CD14-positive monocyte (primary cell): ENCODE measurements at regions of chr9 and their contacts with region 1.

Region 1: GRCh38 chr9:126411225-126411947 is 84.8 kb downstream of the MVB12B start:
- DNase-seq: no peak
- H3K4me3 ChIP-seq: peak overlapping the region in 1 of 3 experiments; percentile 25
- H3K4me3 Mint-ChIP-seq: peak overlapping the region in 1 of 2 donors; percentile 43
- H3K27ac ChIP-seq: peak overlapping the region in 1 of 2 donors; percentile 30
- H3K27ac Mint-ChIP-seq: peak overlapping the region in 6 of 7 donors; percentile 4 to 42 (median 21)
- H3K4me1 ChIP-seq: peaks cover 24 to 34% of the 10 kb centered on the region in 2 donors
- H3K4me1 Mint-ChIP-seq: peaks cover 37% of the 10 kb centered on the region
- H3K27me3 ChIP-seq: no peaks in the 10 kb centered on the region
- H3K27me3 Mint-ChIP-seq: peaks cover 1 to 4% (median 3%) of the 10 kb centered on the region in 3 donors
- CTCF ChIP-seq: no peak

Region 2: DNA sequence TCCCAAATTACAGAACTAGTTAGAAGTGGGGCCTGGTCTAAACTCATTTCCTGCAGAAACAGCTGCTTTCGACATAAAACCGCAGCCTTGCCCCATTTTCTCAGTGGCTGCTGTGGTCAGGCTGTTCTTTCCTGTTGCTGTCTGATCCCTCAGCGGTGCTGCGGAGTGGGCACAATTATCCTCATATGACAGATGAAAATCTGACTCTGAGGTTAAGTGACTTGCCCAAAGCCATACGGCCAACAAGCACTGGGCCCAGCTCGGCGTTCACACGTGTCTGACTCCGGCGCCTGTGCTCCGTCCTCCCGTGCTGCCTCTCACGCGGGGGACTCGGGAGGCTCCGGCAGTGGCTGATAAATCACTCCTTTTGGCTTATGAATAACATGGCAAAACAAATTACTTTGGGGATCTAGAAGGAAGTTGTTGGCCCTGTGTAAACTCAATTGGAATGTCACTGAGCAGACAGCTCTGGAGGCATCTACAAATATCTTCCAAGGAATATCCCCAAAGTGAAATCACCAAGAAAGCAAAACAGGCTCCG is 59.8 kb after region 1 on chr9:
- intact Hi-C with region 1: loop called (anchors 2 to 5 kb)
- DNase-seq: peak; percentile 96 to 99 (median 97)
- H3K4me3 ChIP-seq: peak overlapping the region in 2 of 3 experiments; percentile 8 to 60
- H3K4me3 Mint-ChIP-seq: peak overlapping the region; percentile 67 to 83
- H3K27ac ChIP-seq: peak overlapping the region; percentile 82 to 90
- H3K27ac Mint-ChIP-seq: peak overlapping the region; percentile 92 to 99 (median 97)
- H3K4me1 ChIP-seq: peaks cover 84 to 94% of the 10 kb centered on the region in 2 donors
- H3K4me1 Mint-ChIP-seq: peaks cover 87% of the 10 kb centered on the region
- H3K27me3 ChIP-seq: no peaks in the 10 kb centered on the region
- H3K27me3 Mint-ChIP-seq: peaks cover 0 to 1% (median 0%) of the 10 kb centered on the region in 3 donors
- CTCF ChIP-seq: no peak

Region 3: DNA sequence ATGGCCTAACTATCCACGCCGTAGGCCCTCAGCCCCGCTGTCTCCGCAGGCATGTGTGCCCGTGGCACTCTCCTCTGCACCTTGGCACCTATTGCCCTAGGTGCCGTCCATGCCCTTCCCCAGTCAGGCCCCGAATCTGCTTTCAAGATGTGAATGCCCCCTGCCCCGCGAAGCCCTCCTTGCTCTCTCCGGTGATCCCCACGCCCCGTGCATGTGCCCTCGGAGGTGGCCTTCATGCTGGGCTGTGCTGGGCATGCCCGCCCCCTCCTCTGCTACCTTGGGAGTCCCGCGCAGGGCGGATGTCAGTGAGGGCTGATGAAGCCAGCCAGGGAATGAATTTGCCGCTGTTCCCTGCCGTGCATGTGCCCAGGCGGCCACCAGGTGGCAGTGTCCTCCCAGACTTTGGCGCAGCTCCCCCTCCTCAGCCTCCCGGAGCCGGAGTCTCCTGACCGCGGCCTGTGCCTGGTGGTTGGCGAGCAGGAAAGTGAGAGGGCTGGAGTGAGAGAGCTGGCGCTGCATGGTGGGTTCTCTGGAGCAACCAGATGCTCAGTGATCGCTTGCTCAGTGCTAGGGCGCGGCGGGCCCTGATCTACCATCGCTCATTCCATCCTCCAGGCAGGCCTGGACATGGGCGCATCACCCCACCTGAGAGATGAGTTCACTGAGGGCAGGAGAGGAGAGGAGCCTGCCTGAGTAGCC is 89.4 kb after region 1 on chr9:
- intact Hi-C with region 1: loop called in 1 of 2 experiments (anchors 5 kb)
- DNase-seq: peak; percentile 57 to 75 (median 60)
- H3K4me3 ChIP-seq: no peak overlapping the region
- H3K4me3 Mint-ChIP-seq: peak overlapping the region in 1 of 2 donors; percentile 69
- H3K27ac ChIP-seq: no peak overlapping the region
- H3K27ac Mint-ChIP-seq: peak overlapping the region in 1 of 7 donors; percentile 42
- H3K4me1 ChIP-seq: peaks cover 31 to 44% of the 10 kb centered on the region in 2 donors
- H3K4me1 Mint-ChIP-seq: peaks cover 35% of the 10 kb centered on the region
- H3K27me3 ChIP-seq: peaks cover 0 to 15% of the 10 kb centered on the region in 2 donors
- H3K27me3 Mint-ChIP-seq: peaks cover 13 to 19% (median 19%) of the 10 kb centered on the region in 3 donors
- CTCF ChIP-seq: peak; percentile 98